ENCODE measurements at regions of chr4 and their contacts with region 1.

Region 1: GRCh38 chr4:6727081-6727942 is 11.3 kb downstream of the BLOC1S4 start:
- DNase-seq: no peak
- ATAC-seq: peak in 3 of 4 donors; percentile 27 to 43 (median 36)
- H3K4me3 ChIP-seq: peak overlapping the region in 2 of 12 donors; percentile 12 to 30
- H3K27ac ChIP-seq: no peak overlapping the region
- H3K4me1 ChIP-seq: peaks cover 0 to 7% (median under 1%) of the 10 kb centered on the region in 12 donors
- H3K27me3 ChIP-seq: no peaks in the 10 kb centered on the region
- CTCF ChIP-seq: no peak
- POLR2A ChIP-seq: no peak

Region 2: DNA sequence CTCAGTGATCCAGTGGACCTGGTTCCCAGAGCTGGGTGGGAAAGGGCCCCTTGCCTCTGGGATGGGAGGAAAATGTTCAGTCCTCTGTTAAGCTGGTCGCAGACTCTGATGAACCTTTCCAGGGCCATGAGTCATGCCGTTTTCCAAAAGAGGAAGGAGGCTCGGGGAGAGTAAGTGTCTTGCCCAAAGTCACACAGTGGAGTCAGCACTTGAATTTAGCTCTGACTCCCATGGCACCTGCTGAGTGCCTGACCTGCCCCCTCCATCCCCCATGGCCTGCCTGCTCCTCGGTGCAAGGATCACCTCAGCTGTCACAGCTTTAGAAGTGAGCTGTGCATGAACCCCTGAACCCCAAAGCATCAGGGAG is 41.2 kb after region 1 on chr4:
- intact Hi-C with region 1: loop called in 5 of 10 experiments (anchors 5 to 10 kb)
- DNase-seq: peak in 1 of 5 donors; percentile 67
- ATAC-seq: peak in 2 of 4 donors; percentile 40 to 54
- H3K4me3 ChIP-seq: no peak overlapping the region
- H3K27ac ChIP-seq: peak overlapping the region in 4 of 12 donors; percentile 12 to 69 (median 42)
- H3K4me1 ChIP-seq: peaks cover 0 to 53% (median 28%) of the 10 kb centered on the region in 12 donors
- H3K27me3 ChIP-seq: no peaks in the 10 kb centered on the region
- CTCF ChIP-seq: no peak
- POLR2A ChIP-seq: no peak

Region 3: DNA sequence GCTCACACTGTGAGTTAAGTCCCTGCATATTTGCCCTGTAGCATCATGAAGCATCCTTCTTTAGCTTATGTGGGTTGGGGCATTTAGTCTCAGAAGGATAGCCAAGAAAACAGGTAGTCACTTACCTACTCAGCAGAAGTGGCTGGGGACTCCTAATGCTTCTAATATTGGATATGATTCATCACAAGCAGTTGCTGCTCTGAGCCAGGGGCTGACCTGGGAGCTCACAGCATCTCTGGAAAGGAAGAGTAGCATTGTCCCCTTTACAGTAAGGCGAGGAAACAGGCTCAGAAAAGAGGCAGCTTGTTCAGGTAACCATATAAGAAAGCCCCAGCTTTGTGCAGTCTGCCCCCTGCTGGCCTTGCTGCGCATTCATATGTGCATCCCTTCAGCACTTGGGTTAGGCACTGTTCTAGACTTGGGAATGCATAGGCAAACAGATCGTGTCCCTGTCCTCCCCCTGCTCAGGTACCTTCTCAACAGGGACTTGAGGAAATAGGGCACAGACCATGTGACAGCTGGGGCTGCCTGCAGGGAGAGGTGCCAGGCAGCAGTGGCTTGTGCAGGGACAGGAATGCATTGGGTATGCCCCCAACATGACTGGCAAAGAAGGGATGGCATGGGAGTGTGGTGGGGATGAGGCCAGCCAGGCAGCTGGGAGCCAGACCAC is 146.6 kb after region 1 on chr4:
- intact Hi-C with region 1: loop called in 3 of 10 experiments (anchors 2 to 5 kb)
- DNase-seq: peak; percentile 59 to 83 (median 71)
- ATAC-seq: peak; percentile 52 to 78 (median 59)
- H3K4me3 ChIP-seq: no peak overlapping the region
- H3K27ac ChIP-seq: no peak overlapping the region
- H3K4me1 ChIP-seq: peaks cover 0 to 50% (median 26%) of the 10 kb centered on the region in 12 donors
- H3K27me3 ChIP-seq: no peaks in the 10 kb centered on the region
- CTCF ChIP-seq: peak; percentile 74 to 90 (median 82)
- POLR2A ChIP-seq: no peak

Region 4: DNA sequence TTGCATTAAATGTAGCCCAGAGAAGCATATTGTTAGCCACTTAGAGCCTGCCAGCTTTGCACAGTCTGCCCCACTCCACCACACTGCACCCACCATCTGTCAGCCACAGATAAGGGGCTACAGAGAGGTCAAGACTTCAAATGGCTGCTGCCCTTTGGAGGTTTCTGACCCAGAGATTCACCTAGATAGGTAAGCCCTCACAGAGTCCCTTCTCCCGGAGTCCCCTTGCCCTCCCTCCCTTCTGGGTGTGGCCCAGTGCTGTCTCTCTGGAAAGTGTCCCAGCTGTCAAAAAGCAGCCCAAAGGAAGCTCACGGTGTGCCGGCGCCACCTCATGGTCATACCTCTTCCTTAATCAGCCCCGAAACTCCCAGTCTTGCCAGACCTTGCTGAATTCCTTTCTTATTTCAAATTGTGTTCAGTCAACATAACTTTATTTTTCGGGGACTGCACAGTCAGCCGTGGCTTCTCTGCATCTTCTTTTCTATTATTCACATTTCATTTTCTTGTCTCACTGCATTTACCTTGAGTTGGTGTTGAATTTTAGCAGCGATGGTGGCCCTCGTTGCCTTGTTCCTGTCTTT is 354.7 kb after region 1 on chr4:
- intact Hi-C with region 1: no loop called
- DNase-seq: peak in 4 of 5 donors; percentile 62 to 76 (median 69)
- ATAC-seq: peak; percentile 76 to 94 (median 89)
- H3K4me3 ChIP-seq: no peak overlapping the region
- H3K27ac ChIP-seq: no peak overlapping the region
- H3K4me1 ChIP-seq: peaks cover 0 to 6% (median 0%) of the 10 kb centered on the region in 12 donors
- H3K27me3 ChIP-seq: peaks cover 0 to 34% (median 0%) of the 10 kb centered on the region in 9 donors
- CTCF ChIP-seq: peak; percentile 33 to 63 (median 44)
- POLR2A ChIP-seq: no peak